ENCODE measurements at regions of chr5 and their contacts with region 1.

Region 1: DNA sequence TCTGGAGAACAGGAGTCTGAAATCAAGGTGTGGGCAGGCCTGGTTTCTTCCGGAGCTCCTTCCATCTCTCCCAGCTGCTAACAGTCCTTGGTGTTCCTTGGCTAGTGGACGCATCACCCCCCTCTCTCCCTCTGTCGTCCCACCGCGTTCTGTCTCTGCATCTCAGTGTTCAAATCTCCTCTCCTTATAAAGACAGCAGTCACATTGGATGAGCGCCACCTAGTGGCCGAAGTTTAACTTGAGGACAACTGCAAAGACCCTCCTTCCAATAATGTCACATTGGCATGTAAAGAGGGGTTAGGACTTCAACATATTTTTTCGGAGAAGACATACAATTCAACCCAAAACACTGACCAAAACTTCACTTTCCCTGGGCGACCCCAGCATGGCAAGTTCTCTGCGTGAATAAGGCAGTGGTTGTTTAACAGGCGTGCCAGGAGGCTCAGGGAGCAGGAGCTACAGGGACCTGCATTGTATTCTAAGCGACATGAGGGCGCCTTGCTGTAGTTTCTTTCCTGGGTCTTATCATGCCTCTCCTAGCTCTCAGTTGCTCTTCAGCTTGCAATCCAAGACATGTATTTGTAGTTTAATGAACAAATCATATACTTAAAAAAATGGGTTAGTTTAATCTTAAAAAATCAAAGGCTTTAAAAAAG is 27.9 kb upstream of the BASP1 start:
- DNase-seq: peak; percentile 82
- H3K4me3 ChIP-seq: no peak overlapping the region
- H3K27ac ChIP-seq: no peak overlapping the region
- H3K4me1 ChIP-seq: no peaks in the 10 kb centered on the region
- CTCF ChIP-seq: peak; percentile 94

Region 2: GRCh38 chr5:16936150-16936920 is 253.2 kb before region 1 on chr5 and contains the start of gene MYO10:
- CTCF ChIA-PET with region 1: interaction called, 7 read pairs
- POLR2A ChIA-PET with region 1: no interaction called
- intact Hi-C with region 1: loop called (anchors 5 kb)
- DNase-seq: peak; percentile 65
- H3K4me3 ChIP-seq: peak within 1 kb of the TSS; percentile 63
- H3K27ac ChIP-seq: no peak within 1 kb of the TSS
- H3K4me1 ChIP-seq: no peaks in the 10 kb centered on the region
- CTCF ChIP-seq: no peak
- total RNA-seq, gene MYO10: 0.03 TPM in 1 of 2 replicates, not detected in the other